H1 (cell line): ENCODE measurements at regions of chr16 and their contacts with region 1.

Region 1: GRCh38 chr16:51708861-51709260 is 557.8 kb upstream of the SALL1 start:
- DNase-seq: no peak
- H3K4me3 ChIP-seq: no peak overlapping the region
- H3K27ac ChIP-seq: no peak overlapping the region
- H3K4me1 ChIP-seq: peaks cover 0 to 5% (median 0%) of the 10 kb centered on the region in 4 experiments; a peak in 2 of 7 replicates
- H3K27me3 ChIP-seq: no peaks in the 10 kb centered on the region
- CTCF ChIP-seq: no peak
- EP300 ChIP-seq: no peak
- POLR2A ChIP-seq: no peak
- RAD21 ChIP-seq: no peak

Region 2: GRCh38 chr16:51697454-51697853 is 11.4 kb before region 1 on chr16:
- CTCF ChIA-PET with region 1: interaction called, 10 read pairs
- POLR2A ChIA-PET with region 1: no interaction called
- DNase-seq: no peak
- H3K4me3 ChIP-seq: no peak overlapping the region
- H3K27ac ChIP-seq: no peak overlapping the region
- H3K4me1 ChIP-seq: no peaks in the 10 kb centered on the region; a peak in 1 of 7 replicates
- H3K27me3 ChIP-seq: no peaks in the 10 kb centered on the region
- CTCF ChIP-seq: no peak
- EP300 ChIP-seq: no peak
- POLR2A ChIP-seq: no peak
- RAD21 ChIP-seq: no peak